PC-9 (cell line): ENCODE measurements at regions of chr5 and their contacts with region 1.

Region 1: DNA sequence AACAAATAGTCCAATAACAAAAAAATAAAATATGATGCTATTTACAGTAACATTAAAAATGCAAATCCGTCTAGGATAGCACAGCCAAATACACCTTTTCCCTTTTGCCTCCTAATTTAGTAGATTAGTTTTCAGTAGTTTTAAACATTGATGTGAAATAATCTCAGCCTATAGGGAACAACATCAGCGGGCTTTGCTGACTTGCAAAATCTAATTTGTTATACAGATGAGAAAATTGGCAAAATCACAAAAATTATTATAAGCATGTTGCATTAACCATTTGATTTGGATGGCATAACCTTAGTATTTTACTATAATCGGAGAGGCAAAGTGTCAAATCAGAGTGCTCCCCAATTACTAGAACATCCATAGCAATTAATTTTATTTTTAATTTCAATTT is 563.5 kb downstream of the CDH18 start:
- DNase-seq: no peak
- H3K4me3 ChIP-seq: no peak overlapping the region
- H3K27ac ChIP-seq: no peak overlapping the region
- H3K4me1 ChIP-seq: no peaks in the 10 kb centered on the region
- H3K27me3 ChIP-seq: no peaks in the 10 kb centered on the region
- CTCF ChIP-seq: no peak

Region 2: GRCh38 chr5:19285286-19285685 is 139.2 kb before region 1 on chr5:
- CTCF ChIA-PET with region 1: no interaction called
- POLR2A ChIA-PET with region 1: no interaction called
- intact Hi-C with region 1: no loop called
- DNase-seq: no peak
- H3K4me3 ChIP-seq: no peak overlapping the region
- H3K27ac ChIP-seq: no peak overlapping the region
- H3K4me1 ChIP-seq: no peaks in the 10 kb centered on the region
- H3K27me3 ChIP-seq: no peaks in the 10 kb centered on the region
- CTCF ChIP-seq: no peak

Region 3: DNA sequence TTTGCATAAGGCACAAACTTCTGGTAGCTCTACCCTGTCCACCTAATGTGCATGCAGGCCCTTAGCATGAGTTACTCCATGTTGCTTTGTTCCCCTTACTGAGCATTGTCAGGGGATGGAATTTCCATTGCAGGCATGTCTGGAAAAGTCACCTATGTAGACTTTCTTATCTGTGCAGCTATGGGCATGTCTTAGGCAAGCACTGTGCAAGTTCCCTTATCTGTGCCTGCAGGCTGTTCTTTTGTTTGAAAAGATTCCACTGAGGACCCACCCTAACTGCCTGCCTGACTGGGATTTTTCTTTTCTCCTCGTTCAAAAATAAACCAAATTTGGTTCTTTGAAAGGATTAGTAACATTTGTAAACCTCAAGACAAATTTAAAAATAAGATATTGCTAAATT is 23.5 kb before region 1 on chr5:
- CTCF ChIA-PET with region 1: no interaction called
- POLR2A ChIA-PET with region 1: no interaction called
- intact Hi-C with region 1: loop called (anchors 2 kb)
- DNase-seq: no peak
- H3K4me3 ChIP-seq: no peak overlapping the region
- H3K27ac ChIP-seq: no peak overlapping the region
- H3K4me1 ChIP-seq: no peaks in the 10 kb centered on the region
- H3K27me3 ChIP-seq: no peaks in the 10 kb centered on the region
- CTCF ChIP-seq: no peak